ENCODE measurements at regions of chr3 and their contacts with region 1.

Region 1: DNA sequence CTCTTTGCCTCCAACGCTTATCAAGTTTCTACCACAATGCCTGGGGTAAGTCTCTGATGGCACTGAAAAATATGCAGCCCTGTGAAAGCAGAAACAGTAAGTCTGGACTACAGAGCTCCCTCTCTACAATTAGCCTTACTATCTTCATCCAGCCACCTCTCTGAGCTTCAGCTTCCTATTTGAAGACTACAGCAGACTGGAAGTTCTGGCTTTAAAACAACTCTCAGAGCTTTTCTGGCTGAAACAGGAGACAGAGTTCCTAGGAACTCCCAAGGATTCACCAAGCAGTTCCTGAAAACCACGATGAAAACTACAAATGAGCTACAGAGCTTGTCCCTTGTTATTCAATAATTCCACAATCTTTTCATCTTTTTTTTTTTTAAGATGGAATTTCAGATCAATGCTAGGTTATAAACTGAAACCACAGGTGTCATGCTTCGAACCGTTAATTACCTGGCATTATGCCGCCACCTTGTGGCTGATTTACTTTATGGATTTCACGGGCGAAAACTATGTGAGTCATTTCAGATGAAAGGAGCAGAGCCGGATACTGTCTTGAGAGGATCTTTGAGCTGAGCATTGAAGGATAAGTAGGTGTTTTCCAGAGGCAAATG is 3.9 kb downstream of the CRYGS start:
- DNase-seq: peak; percentile 48 to 84 (median 81)
- ATAC-seq: peak; percentile 98
- H3K4me3 ChIP-seq: no peak overlapping the region
- H3K4me3 Mint-ChIP-seq: peak overlapping the region in 1 of 10 donors; percentile 20
- H3K27ac ChIP-seq: no peak overlapping the region
- H3K27ac Mint-ChIP-seq: peak overlapping the region in 4 of 9 donors; percentile 13 to 73 (median 41)
- H3K4me1 ChIP-seq: peaks cover 3% of the 10 kb centered on the region in 2 donors
- H3K4me1 Mint-ChIP-seq: peaks cover 7 to 24% (median 8%) of the 10 kb centered on the region in 7 donors
- H3K27me3 ChIP-seq: no peaks in the 10 kb centered on the region
- H3K27me3 Mint-ChIP-seq: no peaks in the 10 kb centered on the region

Region 2: DNA sequence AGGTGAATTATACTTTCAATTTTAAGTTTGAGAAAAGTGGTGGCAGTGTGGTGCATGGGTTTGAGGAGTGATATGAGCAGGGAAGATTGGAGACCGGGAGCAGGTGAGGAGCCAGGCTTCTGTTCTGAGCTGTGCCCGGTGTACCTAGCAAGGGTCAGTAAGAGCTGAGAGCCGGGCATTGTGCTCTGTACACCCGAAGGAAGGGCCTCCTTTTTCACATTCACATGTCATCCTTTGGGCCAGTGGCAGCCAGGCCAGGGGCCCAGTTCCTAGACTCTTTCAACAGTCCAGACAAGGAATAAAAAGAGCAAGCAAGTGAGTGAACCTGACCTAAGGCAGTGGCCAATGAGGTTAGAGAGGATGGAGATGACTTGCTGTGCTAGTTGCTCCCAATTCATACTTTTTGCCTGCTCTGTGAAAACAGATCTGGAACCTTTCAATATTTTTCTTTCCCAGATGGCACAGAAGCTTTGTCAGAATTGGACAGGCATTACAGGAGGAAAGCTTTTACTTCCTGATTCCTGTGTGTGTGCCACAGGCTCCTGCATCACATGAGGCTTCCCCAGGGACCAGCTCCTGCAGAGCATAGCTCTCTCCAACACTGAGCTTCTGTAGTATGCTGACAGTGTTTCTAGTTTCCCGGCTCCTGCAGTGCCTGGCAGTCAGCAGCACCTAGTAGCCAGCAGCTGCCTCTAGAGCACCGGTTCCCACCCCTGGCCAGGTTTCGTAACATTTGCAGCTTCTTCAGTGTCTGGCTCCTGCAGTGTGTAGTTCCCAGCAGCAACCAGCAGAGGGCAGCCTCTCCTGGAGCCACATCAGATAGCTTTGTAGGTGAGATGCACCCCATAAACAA is 597.2 kb before region 1 on chr3:
- CTCF ChIA-PET with region 1: interaction called, 15 read pairs
- POLR2A ChIA-PET with region 1: interaction called, 6 read pairs
- intact Hi-C with region 1: loop called in 1 of 2 experiments (anchors 1 kb)
- DNase-seq: peak; percentile 72 to 88 (median 82)
- ATAC-seq: peak; percentile 100
- H3K4me3 ChIP-seq: peak overlapping the region; percentile 26
- H3K4me3 Mint-ChIP-seq: peak overlapping the region; percentile 9 to 76 (median 61)
- H3K27ac ChIP-seq: no peak overlapping the region
- H3K27ac Mint-ChIP-seq: peak overlapping the region in 6 of 9 donors; percentile 55 to 87 (median 68)
- H3K4me1 ChIP-seq: peaks cover 7 to 10% of the 10 kb centered on the region in 2 donors
- H3K4me1 Mint-ChIP-seq: peaks cover 11 to 26% (median 19%) of the 10 kb centered on the region in 7 donors
- H3K27me3 ChIP-seq: no peaks in the 10 kb centered on the region
- H3K27me3 Mint-ChIP-seq: peaks cover 0 to 24% (median 8%) of the 10 kb centered on the region in 5 donors

Region 3: DNA sequence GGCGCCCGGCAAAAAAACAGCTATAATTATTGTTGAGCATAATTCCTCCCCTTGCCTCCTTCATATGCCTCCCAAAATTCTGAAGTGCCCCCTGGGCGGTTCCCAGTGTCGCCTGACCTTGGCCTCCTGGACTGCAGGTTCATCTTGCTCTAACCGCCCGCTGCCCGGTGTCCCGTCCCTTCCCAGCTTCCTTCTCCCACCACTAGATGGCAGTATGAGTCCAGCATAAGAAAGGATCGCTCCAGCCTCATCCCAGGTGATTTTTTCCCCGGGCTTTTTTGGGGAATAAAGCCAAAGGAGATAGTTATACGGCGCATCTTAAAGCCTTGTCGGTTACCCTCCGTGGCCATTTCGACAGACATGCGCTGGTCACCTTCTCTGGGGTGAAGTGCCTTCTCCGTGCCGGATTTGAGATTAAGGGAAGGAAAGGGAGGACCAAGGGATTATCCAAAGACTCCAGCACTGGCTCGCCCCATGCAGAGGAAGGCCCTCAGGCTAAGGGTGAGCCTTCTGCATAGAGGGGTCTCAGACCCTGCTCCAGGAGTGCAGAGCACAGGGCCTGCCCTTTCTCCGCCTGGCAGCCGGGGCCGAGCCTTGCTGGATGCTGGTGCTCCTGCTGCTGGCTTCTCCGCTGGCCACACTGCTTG is 556.7 kb before region 1 on chr3:
- CTCF ChIA-PET with region 1: interaction called, 38 read pairs
- POLR2A ChIA-PET with region 1: no interaction called
- intact Hi-C with region 1: loop called (anchors 1 kb)
- DNase-seq: peak; percentile 7 to 62 (median 42)
- ATAC-seq: peak; percentile 83
- H3K4me3 ChIP-seq: no peak overlapping the region
- H3K4me3 Mint-ChIP-seq: no peak overlapping the region
- H3K27ac ChIP-seq: no peak overlapping the region
- H3K27ac Mint-ChIP-seq: no peak overlapping the region
- H3K4me1 ChIP-seq: no peaks in the 10 kb centered on the region
- H3K4me1 Mint-ChIP-seq: peaks cover 0 to 6% (median 5%) of the 10 kb centered on the region in 7 donors
- H3K27me3 ChIP-seq: no peaks in the 10 kb centered on the region
- H3K27me3 Mint-ChIP-seq: peaks cover 0 to 20% (median 7%) of the 10 kb centered on the region in 5 donors

Region 4: GRCh38 chr3:186259612-186260383 is 280.5 kb before region 1 on chr3:
- CTCF ChIA-PET with region 1: interaction called, 99 read pairs
- POLR2A ChIA-PET with region 1: interaction called, 5 read pairs
- intact Hi-C with region 1: loop called (anchors 1 kb)
- DNase-seq: peak; percentile 17 to 65 (median 43)
- ATAC-seq: peak; percentile 92
- H3K4me3 ChIP-seq: no peak overlapping the region
- H3K4me3 Mint-ChIP-seq: peak overlapping the region in 3 of 10 donors; percentile 23 to 41 (median 35)
- H3K27ac ChIP-seq: no peak overlapping the region
- H3K27ac Mint-ChIP-seq: peak overlapping the region in 8 of 9 donors; percentile 12 to 73 (median 32)
- H3K4me1 ChIP-seq: peaks cover 0 to 3% of the 10 kb centered on the region in 2 donors
- H3K4me1 Mint-ChIP-seq: peaks cover 13 to 23% (median 20%) of the 10 kb centered on the region in 7 donors
- H3K27me3 ChIP-seq: no peaks in the 10 kb centered on the region
- H3K27me3 Mint-ChIP-seq: no peaks in the 10 kb centered on the region

Region 5: GRCh38 chr3:186464424-186465093 is 75.8 kb before region 1 on chr3:
- CTCF ChIA-PET with region 1: interaction called, 7 read pairs
- POLR2A ChIA-PET with region 1: no interaction called
- intact Hi-C with region 1: loop called in 1 of 2 experiments (anchors 5 kb)
- DNase-seq: no peak
- ATAC-seq: no peak
- H3K4me3 ChIP-seq: no peak overlapping the region
- H3K4me3 Mint-ChIP-seq: no peak overlapping the region
- H3K27ac ChIP-seq: no peak overlapping the region
- H3K27ac Mint-ChIP-seq: no peak overlapping the region
- H3K4me1 ChIP-seq: no peaks in the 10 kb centered on the region
- H3K4me1 Mint-ChIP-seq: peaks cover 0 to 3% (median 0%) of the 10 kb centered on the region in 7 donors
- H3K27me3 ChIP-seq: no peaks in the 10 kb centered on the region
- H3K27me3 Mint-ChIP-seq: peaks cover 0 to 11% (median 3%) of the 10 kb centered on the region in 5 donors

Region 6: DNA sequence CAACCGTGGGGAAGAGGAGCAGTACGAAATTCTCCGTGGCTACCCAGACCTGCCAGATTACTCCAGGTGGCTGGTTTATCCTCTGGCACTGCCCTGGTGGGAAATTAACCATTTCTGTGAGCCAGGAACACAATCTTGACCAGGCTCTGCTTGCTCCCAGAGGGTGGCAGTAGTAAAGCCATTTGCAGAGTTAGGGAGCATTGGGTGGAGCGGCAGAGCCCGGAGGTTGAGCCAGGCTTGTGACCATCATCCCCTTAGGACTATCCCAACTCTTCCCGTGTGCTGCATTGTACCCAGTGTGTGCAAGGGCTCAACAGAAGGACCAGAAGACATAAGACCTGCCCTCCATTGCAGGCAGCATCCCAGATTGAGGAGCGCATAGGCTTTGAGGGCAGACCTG is 182.1 kb after region 1 on chr3:
- CTCF ChIA-PET with region 1: interaction called, 13 read pairs
- POLR2A ChIA-PET with region 1: no interaction called
- intact Hi-C with region 1: no loop called
- DNase-seq: no peak
- ATAC-seq: no peak
- H3K4me3 ChIP-seq: no peak overlapping the region
- H3K4me3 Mint-ChIP-seq: no peak overlapping the region
- H3K27ac ChIP-seq: no peak overlapping the region
- H3K27ac Mint-ChIP-seq: no peak overlapping the region
- H3K4me1 ChIP-seq: no peaks in the 10 kb centered on the region
- H3K4me1 Mint-ChIP-seq: peaks cover 0 to 2% (median 0%) of the 10 kb centered on the region in 7 donors
- H3K27me3 ChIP-seq: no peaks in the 10 kb centered on the region
- H3K27me3 Mint-ChIP-seq: peaks cover 0 to 8% (median 4%) of the 10 kb centered on the region in 5 donors

Region 7: GRCh38 chr3:186760141-186760813 is 219.9 kb after region 1 on chr3:
- CTCF ChIA-PET with region 1: no interaction called
- POLR2A ChIA-PET with region 1: no interaction called
- intact Hi-C with region 1: no loop called
- DNase-seq: no peak
- ATAC-seq: no peak
- H3K4me3 ChIP-seq: no peak overlapping the region
- H3K4me3 Mint-ChIP-seq: no peak overlapping the region
- H3K27ac ChIP-seq: no peak overlapping the region
- H3K27ac Mint-ChIP-seq: no peak overlapping the region
- H3K4me1 ChIP-seq: no peaks in the 10 kb centered on the region
- H3K4me1 Mint-ChIP-seq: peaks cover 0 to 3% (median 0%) of the 10 kb centered on the region in 7 donors
- H3K27me3 ChIP-seq: no peaks in the 10 kb centered on the region
- H3K27me3 Mint-ChIP-seq: peaks cover 0 to 10% (median 0%) of the 10 kb centered on the region in 5 donors